Activated CD4-positive, alpha-beta memory T cell treated with anti-CD3 and anti-CD28 coated beads for 36 hours (primary cell): ENCODE measurements at regions of chr12 and their contacts with region 1.

Region 1: DNA sequence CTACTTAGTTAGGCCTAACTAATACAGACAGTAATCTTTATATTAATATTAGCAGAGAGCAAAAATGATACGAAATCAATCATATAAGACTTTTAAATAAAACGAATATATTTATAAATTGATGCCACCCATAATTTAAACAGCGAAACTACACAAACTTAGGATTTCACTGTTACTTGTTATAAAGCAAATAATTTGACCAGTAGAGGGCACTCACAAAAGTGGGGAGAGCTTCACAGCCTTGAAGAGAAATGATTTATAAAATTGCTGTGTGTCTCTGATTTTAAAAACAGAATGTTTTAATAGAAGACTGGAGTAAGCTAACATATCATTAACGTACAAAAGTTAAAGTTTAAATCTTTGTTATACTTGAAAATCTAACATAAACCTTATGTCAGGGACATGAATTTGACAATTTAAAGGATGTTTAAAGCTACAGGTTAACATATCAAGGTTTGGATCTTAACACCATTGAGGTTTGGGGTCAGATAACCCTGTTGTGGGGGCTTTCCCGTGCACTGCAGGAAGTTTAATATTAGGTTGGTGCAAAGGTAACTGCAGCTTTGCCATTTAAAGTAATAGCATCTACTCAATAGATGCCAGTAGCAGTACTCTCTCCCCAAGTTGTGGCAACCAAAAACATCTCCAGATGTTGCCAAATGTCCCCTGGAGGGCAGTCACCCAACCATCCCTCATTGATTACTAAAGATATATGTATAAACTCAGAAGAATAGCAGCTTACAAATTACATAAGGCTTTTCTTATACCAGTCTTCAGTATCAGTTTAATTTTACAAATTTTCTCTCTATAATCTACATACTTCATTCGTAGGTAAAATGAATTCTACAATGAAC is 9.3 kb downstream of the KRAS start:
- DNase-seq: no peak
- H3K4me3 Mint-ChIP-seq: no peak overlapping the region
- H3K27ac Mint-ChIP-seq: no peak overlapping the region
- H3K4me1 Mint-ChIP-seq: peaks cover 26% of the 10 kb centered on the region
- H3K27me3 Mint-ChIP-seq: no peaks in the 10 kb centered on the region

Region 2: DNA sequence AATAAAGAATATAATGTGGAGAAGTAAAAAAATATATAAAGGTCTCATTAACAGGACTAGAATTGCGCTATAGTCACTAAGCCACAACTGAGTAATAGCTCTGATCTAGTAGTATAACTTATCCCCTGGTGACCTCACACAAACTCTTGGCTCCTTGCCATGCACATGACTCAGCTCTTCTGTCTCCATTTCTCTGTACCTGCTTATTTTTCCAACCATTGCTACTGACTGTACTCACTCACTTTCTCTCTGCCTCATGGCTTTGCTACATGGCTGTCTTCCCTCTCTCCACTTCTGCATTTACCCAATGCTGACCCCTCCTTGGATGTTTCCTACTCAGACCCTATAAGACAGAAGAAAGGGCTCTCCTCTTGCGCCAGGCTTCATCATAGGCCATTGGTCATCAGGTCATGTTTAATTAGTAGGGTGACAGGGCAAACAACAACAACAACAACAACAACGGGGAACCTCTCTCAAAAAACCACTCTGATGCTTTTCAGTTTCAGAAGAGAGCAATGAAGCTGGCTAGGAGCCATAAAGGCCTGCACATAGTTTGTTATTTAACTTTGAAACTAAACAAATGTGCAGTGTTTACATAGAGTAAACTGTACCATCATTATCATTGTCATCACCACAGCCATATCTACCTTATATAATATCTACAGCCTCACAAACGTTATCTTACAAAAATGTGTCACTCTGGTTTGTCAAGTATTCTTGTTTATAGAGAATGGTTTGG is 35.0 kb after region 1 on chr12:
- CTCF ChIA-PET with region 1: interaction called, 11 read pairs
- POLR2A ChIA-PET with region 1: no interaction called
- intact Hi-C with region 1: no loop called
- DNase-seq: peak; percentile 89
- H3K4me3 Mint-ChIP-seq: no peak overlapping the region
- H3K27ac Mint-ChIP-seq: peak overlapping the region; percentile 42
- H3K4me1 Mint-ChIP-seq: peaks cover 24% of the 10 kb centered on the region
- H3K27me3 Mint-ChIP-seq: no peaks in the 10 kb centered on the region

Region 3: DNA sequence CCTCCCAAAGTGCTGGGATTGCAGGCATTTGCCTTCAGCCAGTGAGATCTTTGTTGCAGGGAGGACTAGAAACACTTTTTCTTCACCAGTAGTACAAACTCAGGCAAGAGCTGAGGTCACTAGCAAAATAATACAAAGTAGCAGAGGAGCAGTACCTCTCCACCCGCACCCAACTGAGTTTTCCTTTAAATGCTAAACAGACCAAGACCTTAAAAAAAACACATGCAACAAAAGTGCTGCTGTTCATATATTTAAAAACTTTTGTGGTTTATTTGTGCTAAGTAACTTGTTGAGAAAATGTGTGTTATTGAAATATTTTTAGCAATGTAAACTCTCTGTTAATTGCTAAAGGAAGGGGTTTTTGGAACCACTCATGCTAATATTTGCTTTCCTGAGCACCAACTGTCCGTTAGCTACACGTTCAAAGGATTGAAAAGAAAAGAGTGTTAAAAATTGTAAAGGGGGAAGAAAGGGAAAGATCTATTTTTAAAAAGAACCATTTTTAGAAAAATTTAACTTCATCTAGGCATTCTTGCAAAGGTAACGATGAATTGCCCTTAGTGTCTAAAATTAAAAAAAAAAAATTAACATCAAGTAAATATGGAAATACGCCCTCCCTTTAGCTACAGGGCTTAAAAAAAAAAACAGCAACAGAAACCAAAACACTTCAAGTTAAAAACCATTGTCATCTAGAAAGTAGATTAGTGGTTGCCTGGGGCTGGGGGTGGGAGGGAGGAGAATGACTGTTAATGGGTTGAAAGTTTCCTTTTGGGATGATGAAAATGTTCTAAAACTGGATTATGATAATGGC is 123.3 kb after region 1 on chr12:
- CTCF ChIA-PET with region 1: interaction called, 15 read pairs
- POLR2A ChIA-PET with region 1: no interaction called
- intact Hi-C with region 1: no loop called
- DNase-seq: peak; percentile 83
- H3K4me3 Mint-ChIP-seq: peak overlapping the region; percentile 16
- H3K27ac Mint-ChIP-seq: peak overlapping the region; percentile 2
- H3K4me1 Mint-ChIP-seq: peaks cover 16% of the 10 kb centered on the region
- H3K27me3 Mint-ChIP-seq: peaks cover 10% of the 10 kb centered on the region